ENCODE measurements at regions of chr5 and their contacts with region 1.

Region 1: GRCh38 chr5:131634996-131635754 is at the start of gene RAPGEF6:
- DNase-seq: peak; percentile 99
- ATAC-seq: peak; percentile 88
- H3K4me3 ChIP-seq: peak within 1 kb of the TSS; percentile 77 to 99 (median 92)
- H3K27ac ChIP-seq: peak within 1 kb of the TSS; percentile 94
- H3K4me1 ChIP-seq: peaks cover 43% of the 10 kb centered on the region
- H3K27me3 ChIP-seq: no peaks in the 10 kb centered on the region; a peak in 1 of 5 replicates
- CTCF ChIP-seq: peak; percentile 43
- EP300 ChIP-seq: no peak
- POLR2A ChIP-seq: peak; percentile 79 to 83; a peak in 3 of 4 replicates
- RAD21 ChIP-seq: peak; percentile 23; the same call in 1 of the 2 replicates
- total RNA-seq, gene RAPGEF6: 23.3 and 24.6 TPM in 2 replicates

Region 2: GRCh38 chr5:130501151-130501865 is 1133.9 kb before region 1 on chr5:
- CTCF ChIA-PET with region 1: no interaction called
- POLR2A ChIA-PET with region 1: no interaction called
- in situ Hi-C with region 1: no loop called
- intact Hi-C with region 1: no loop called
- DNase-seq: no peak
- ATAC-seq: no peak
- H3K4me3 ChIP-seq: no peak overlapping the region
- H3K27ac ChIP-seq: no peak overlapping the region
- H3K4me1 ChIP-seq: no peaks in the 10 kb centered on the region
- H3K27me3 ChIP-seq: no peaks in the 10 kb centered on the region
- CTCF ChIP-seq: no peak
- EP300 ChIP-seq: no peak
- POLR2A ChIP-seq: no peak
- RAD21 ChIP-seq: no peak

Region 3: DNA sequence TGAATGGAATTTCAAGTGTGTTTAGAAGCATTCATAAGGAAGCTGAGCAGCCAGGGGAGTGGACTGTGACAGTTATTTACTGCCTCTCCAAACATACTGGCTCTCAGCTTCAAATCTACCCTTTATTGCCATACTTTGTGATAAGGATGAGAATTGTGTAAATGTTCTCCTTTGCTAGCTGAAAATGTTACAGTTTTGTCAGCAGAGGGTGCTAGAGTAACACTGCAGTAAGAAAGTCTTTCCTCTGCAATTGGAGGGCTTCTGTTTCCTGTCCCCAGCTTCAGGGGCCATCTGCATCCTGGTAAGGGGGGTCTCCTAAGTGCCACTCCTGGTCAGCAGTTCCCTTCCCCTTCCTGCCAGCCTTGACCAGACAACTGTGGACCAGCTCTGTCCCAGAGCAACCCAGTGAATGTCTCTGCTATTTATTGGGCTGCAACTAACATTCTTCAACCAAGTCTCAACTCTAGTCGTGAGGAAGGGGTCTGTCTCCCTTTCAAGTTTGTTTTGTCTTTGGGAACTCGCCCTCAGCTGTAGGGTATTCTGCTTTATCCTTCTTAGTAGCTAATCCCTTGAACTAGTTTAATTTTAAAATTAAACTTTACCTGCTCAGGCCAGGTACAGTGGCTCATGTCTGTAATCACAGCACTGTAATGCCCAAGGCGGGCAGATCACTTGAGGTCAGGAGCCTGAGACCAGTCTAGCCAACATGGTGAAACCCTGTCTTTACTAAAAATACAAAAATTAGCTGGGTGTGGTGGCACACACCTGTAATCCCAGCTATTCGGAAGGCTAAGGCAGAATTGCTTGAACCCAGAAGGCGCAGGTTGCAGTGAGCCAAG is 45.4 kb before region 1 on chr5:
- CTCF ChIA-PET with region 1: interaction called, 4 read pairs
- POLR2A ChIA-PET with region 1: interaction called, 7 read pairs
- in situ Hi-C with region 1: no loop called
- intact Hi-C with region 1: loop called (anchors 1 kb)
- DNase-seq: peak; percentile 60
- ATAC-seq: peak; percentile 86
- H3K4me3 ChIP-seq: no peak overlapping the region
- H3K27ac ChIP-seq: no peak overlapping the region
- H3K4me1 ChIP-seq: peaks cover 15% of the 10 kb centered on the region; the same call in 1 of the 2 replicates
- H3K27me3 ChIP-seq: no peaks in the 10 kb centered on the region
- CTCF ChIP-seq: peak; percentile 87
- EP300 ChIP-seq: no peak
- POLR2A ChIP-seq: no peak
- RAD21 ChIP-seq: peak; percentile 87

Region 4: GRCh38 chr5:131610198-131611063 is 24.7 kb before region 1 on chr5:
- CTCF ChIA-PET with region 1: no interaction called
- POLR2A ChIA-PET with region 1: interaction called, 31 read pairs
- in situ Hi-C with region 1: no loop called
- intact Hi-C with region 1: loop called (anchors 1 kb)
- DNase-seq: peak; percentile 86
- ATAC-seq: peak; percentile 81
- H3K4me3 ChIP-seq: peak overlapping the region in 2 of 3 experiments; percentile 17 to 30; a peak in 3 of 6 replicates
- H3K27ac ChIP-seq: peak overlapping the region; percentile 94
- H3K4me1 ChIP-seq: peaks cover 73% of the 10 kb centered on the region
- H3K27me3 ChIP-seq: no peaks in the 10 kb centered on the region
- CTCF ChIP-seq: no peak
- EP300 ChIP-seq: peak in 1 of 2 experiments; percentile 85; a peak in 2 of 4 replicates
- POLR2A ChIP-seq: no peak
- RAD21 ChIP-seq: no peak

Region 5: GRCh38 chr5:131661931-131662330 is 26.8 kb after region 1 on chr5:
- CTCF ChIA-PET with region 1: no interaction called
- POLR2A ChIA-PET with region 1: interaction called, 3 read pairs
- in situ Hi-C with region 1: no loop called
- intact Hi-C with region 1: loop called (anchors 2 kb)
- DNase-seq: no peak
- ATAC-seq: no peak
- H3K4me3 ChIP-seq: no peak overlapping the region
- H3K27ac ChIP-seq: no peak overlapping the region
- H3K4me1 ChIP-seq: peaks cover 9% of the 10 kb centered on the region
- H3K27me3 ChIP-seq: no peaks in the 10 kb centered on the region
- CTCF ChIP-seq: no peak
- EP300 ChIP-seq: no peak
- POLR2A ChIP-seq: no peak
- RAD21 ChIP-seq: no peak